ENCODE measurements at regions of chr6 and their contacts with region 1.

Region 1: GRCh38 chr6:70500681-70501080 is 66.0 kb upstream of the SDHAF4 start:
- DNase-seq: no peak
- H3K4me3 ChIP-seq: no peak overlapping the region
- H3K27ac ChIP-seq: no peak overlapping the region
- H3K4me1 ChIP-seq: no peaks in the 10 kb centered on the region
- H3K27me3 ChIP-seq: no peaks in the 10 kb centered on the region

Region 2: DNA sequence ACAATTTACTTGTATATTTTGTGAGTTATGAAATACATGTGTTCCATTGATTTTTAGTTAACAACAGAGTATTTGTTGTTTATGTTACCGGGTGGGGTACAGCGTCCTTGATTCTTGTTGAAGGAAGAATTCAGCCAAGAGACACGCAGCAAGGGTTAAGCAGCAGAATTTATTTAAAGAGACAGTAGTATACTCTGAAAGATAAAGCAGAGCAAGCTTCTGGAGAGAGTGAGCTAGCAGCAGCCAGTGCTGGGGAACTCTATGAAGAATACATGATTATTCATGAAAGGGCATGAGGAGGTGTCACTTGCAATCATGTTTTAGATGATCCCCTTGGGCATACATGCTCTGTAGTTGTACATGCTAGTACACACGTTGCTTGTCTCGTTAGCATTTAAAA is 11.3 kb before region 1 on chr6:
- CTCF ChIA-PET with region 1: no interaction called
- POLR2A ChIA-PET with region 1: no interaction called
- DNase-seq: no peak
- H3K4me3 ChIP-seq: no peak overlapping the region
- H3K27ac ChIP-seq: no peak overlapping the region
- H3K4me1 ChIP-seq: no peaks in the 10 kb centered on the region
- H3K27me3 ChIP-seq: no peaks in the 10 kb centered on the region

Region 3: GRCh38 chr6:71808865-71809264 is 1308.2 kb after region 1 on chr6:
- CTCF ChIA-PET with region 1: no interaction called
- POLR2A ChIA-PET with region 1: interaction called, 10 read pairs
- DNase-seq: no peak
- H3K4me3 ChIP-seq: no peak overlapping the region
- H3K27ac ChIP-seq: no peak overlapping the region
- H3K4me1 ChIP-seq: no peaks in the 10 kb centered on the region
- H3K27me3 ChIP-seq: no peaks in the 10 kb centered on the region